ENCODE measurements at regions of chr20 and their contacts with region 1.

Region 1: DNA sequence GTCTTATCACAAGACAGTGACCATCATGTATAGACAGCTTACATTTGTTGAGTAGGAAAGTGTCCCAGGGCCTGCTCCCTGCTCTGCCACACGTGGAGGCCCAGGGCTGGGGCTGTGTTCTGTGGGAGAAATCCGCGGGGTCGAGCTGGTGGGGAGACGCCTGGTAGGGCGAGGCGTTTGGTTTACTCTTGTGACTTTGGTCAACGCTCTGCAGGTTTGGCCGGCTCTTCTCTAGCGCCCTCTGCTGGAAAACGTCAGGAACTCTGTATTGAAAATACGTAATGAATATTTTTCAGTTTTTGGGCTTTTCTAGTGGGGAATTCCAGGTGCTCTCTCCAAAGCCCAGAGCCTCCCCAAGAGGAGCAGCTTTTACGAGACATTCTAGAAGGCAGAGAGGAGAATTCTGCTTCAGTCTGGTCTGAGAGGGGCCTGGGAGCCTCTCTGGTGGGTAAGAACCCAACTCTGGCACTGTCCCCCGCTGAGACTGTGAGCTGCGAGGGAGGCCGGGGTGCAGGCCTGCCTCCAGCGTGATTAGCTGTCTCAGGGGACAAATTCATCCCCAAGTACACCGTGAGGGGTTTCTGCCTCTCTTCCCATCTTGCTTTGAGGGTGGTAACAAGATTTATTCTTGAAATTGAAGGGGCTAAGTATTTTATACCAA is 112.6 kb upstream of the RALGAPA2 start:
- DNase-seq: peak; percentile 11
- ATAC-seq: peak; percentile 93
- H3K4me3 ChIP-seq: no peak overlapping the region
- H3K27ac ChIP-seq: no peak overlapping the region
- H3K4me1 ChIP-seq: no peaks in the 10 kb centered on the region
- H3K27me3 ChIP-seq: no peaks in the 10 kb centered on the region
- CTCF ChIP-seq: peak; percentile 81 to 89 (median 82)
- EP300 ChIP-seq: no peak
- POLR2A ChIP-seq: no peak
- RAD21 ChIP-seq: peak; percentile 91

Region 2: GRCh38 chr20:20593447-20594170 is 231.4 kb before region 1 on chr20:
- CTCF ChIA-PET with region 1: interaction called, 54 read pairs
- POLR2A ChIA-PET with region 1: no interaction called
- RAD21 ChIA-PET with region 1: interaction called, 4 read pairs
- SMC1A ChIA-PET with region 1: interaction called, 6 read pairs
- in situ Hi-C with region 1: no loop called
- intact Hi-C with region 1: no loop called
- DNase-seq: no peak
- ATAC-seq: peak; percentile 93
- H3K4me3 ChIP-seq: no peak overlapping the region
- H3K27ac ChIP-seq: no peak overlapping the region
- H3K4me1 ChIP-seq: no peaks in the 10 kb centered on the region
- H3K27me3 ChIP-seq: no peaks in the 10 kb centered on the region
- CTCF ChIP-seq: peak; percentile 47 to 63 (median 52); a peak in 5 of 6 replicates
- EP300 ChIP-seq: no peak
- POLR2A ChIP-seq: no peak
- RAD21 ChIP-seq: peak; percentile 43

Region 3: DNA sequence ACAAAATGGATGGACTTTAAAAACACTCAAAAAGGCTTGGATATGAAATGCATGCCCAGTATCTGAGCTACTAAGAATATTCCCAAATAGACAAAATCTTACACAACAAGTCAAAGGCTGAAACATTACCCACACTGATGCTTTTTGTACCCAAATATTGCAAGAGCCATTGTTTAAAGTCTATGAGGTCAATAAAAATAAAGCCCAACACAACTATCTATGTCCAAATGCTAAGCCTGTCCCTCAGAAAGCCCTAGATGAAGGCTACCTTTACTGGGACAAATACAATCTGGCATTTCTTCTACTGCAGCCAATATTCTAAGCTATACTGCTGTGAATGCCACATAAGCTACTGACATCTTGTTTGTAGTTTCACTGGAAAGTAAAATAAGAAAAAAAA is 166.9 kb before region 1 on chr20:
- CTCF ChIA-PET with region 1: interaction called, 113 read pairs
- POLR2A ChIA-PET with region 1: no interaction called
- RAD21 ChIA-PET with region 1: interaction called, 13 read pairs
- SMC1A ChIA-PET with region 1: interaction called, 9 read pairs
- in situ Hi-C with region 1: loop called (anchors 5 kb)
- intact Hi-C with region 1: no loop called
- DNase-seq: no peak
- ATAC-seq: no peak
- H3K4me3 ChIP-seq: no peak overlapping the region
- H3K27ac ChIP-seq: no peak overlapping the region
- H3K4me1 ChIP-seq: no peaks in the 10 kb centered on the region
- H3K27me3 ChIP-seq: no peaks in the 10 kb centered on the region
- CTCF ChIP-seq: no peak
- EP300 ChIP-seq: no peak
- POLR2A ChIP-seq: no peak
- RAD21 ChIP-seq: no peak

Region 4: DNA sequence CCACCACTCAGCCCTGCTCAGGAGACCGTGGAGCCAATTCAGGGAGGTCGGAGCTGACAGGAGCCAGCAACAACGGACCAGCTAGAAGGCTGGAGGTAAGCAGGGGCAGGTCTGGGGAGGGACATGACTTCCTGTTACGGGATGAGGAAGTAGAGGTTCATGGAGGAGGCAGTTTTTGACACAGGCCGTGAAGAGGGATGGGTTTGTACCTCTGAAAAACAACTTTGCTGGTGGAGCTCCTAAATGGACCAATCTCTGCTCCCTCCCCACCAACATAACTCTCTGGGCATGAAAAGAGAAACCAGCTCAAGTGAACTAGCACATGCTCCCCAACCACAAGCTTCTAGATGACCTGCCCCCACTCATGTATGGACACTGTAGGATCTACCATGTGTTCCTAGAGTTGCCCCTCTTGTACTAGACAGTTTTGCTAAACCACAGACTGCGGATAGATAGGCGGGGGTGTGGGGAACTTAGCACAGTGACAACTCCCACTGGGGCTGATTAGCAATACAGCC is 144.0 kb before region 1 on chr20:
- CTCF ChIA-PET with region 1: interaction called, 7 read pairs
- POLR2A ChIA-PET with region 1: no interaction called
- RAD21 ChIA-PET with region 1: no interaction called
- SMC1A ChIA-PET with region 1: interaction called, 10 read pairs
- in situ Hi-C with region 1: no loop called
- intact Hi-C with region 1: no loop called
- DNase-seq: no peak
- ATAC-seq: peak; percentile 71
- H3K4me3 ChIP-seq: peak overlapping the region; percentile 21; the same call in 1 of the 2 replicates
- H3K27ac ChIP-seq: peak overlapping the region; percentile 67
- H3K4me1 ChIP-seq: peaks cover 17% of the 10 kb centered on the region
- H3K27me3 ChIP-seq: no peaks in the 10 kb centered on the region
- CTCF ChIP-seq: no peak
- EP300 ChIP-seq: no peak
- POLR2A ChIP-seq: peak; percentile 24; the same call in 1 of the 2 replicates
- RAD21 ChIP-seq: no peak

Region 5: GRCh38 chr20:20734475-20734948 is 90.5 kb before region 1 on chr20:
- CTCF ChIA-PET with region 1: interaction called, 6 read pairs
- POLR2A ChIA-PET with region 1: no interaction called
- RAD21 ChIA-PET with region 1: interaction called, 5 read pairs
- SMC1A ChIA-PET with region 1: interaction called, 4 read pairs
- in situ Hi-C with region 1: no loop called
- intact Hi-C with region 1: loop called (anchors 5 kb)
- DNase-seq: peak; percentile 49
- ATAC-seq: peak; percentile 59
- H3K4me3 ChIP-seq: no peak overlapping the region
- H3K27ac ChIP-seq: peak overlapping the region; percentile 17; the same call in 1 of the 2 replicates
- H3K4me1 ChIP-seq: peaks cover 21% of the 10 kb centered on the region
- H3K27me3 ChIP-seq: no peaks in the 10 kb centered on the region
- CTCF ChIP-seq: no peak
- EP300 ChIP-seq: no peak
- POLR2A ChIP-seq: no peak
- RAD21 ChIP-seq: no peak

Measured in GM12878 (cell line).